H1 (cell line): ENCODE measurements at regions of chr7 and their contacts with region 1.

Region 1: GRCh38 chr7:56019501-56019900 is 31.7 kb downstream of the PSPH start:
- DNase-seq: no peak
- H3K4me3 ChIP-seq: no peak overlapping the region
- H3K27ac ChIP-seq: no peak overlapping the region
- H3K4me1 ChIP-seq: no peaks in the 10 kb centered on the region
- H3K27me3 ChIP-seq: no peaks in the 10 kb centered on the region
- CTCF ChIP-seq: no peak
- EP300 ChIP-seq: no peak
- POLR2A ChIP-seq: no peak
- RAD21 ChIP-seq: no peak

Region 2: DNA sequence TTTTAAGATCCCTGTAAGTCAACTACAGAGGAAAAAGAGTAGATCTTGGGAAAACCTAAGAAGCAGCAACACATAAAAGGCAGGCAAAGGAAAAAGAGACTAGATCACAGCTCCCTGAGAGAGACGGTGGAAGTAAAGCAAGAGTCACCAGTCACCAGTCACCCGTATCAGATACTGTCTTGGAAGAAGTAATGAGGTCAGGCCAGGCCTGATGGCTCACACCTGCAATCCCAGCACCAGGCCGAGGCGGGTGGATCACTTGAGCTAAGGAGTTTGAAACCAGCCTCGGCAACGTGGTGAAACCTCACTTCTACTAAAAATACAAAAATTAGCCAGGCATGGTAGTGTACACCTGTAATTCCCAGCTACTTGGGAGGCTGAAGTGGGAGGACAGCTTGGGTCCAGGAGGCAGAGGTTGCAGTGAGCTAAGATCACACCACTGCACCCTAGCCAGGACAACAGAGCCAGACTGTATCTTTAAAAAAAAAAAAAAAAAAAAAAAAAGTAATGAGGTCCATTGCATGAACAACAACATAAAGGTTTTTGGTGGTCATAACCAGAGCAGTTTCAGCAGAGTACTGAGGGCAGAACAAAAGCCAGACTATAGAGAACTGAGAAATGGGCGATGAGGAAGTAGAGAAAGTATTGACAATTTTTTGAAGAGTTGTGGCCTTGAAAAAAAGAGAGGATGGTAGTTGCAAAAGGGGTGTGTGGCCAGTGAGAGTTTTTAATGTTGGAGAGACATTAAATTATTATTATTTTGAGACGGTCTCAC is 115.3 kb before region 1 on chr7:
- CTCF ChIA-PET with region 1: no interaction called
- POLR2A ChIA-PET with region 1: no interaction called
- DNase-seq: no peak
- H3K4me3 ChIP-seq: no peak overlapping the region
- H3K27ac ChIP-seq: no peak overlapping the region
- H3K4me1 ChIP-seq: peaks cover 0 to 3% (median 0%) of the 10 kb centered on the region in 4 experiments; a peak in 1 of 7 replicates
- H3K27me3 ChIP-seq: no peaks in the 10 kb centered on the region
- CTCF ChIP-seq: no peak
- EP300 ChIP-seq: no peak
- POLR2A ChIP-seq: no peak
- RAD21 ChIP-seq: no peak

Region 3: GRCh38 chr7:56003749-56004148 is 15.8 kb before region 1 on chr7:
- CTCF ChIA-PET with region 1: interaction called, 15 read pairs
- POLR2A ChIA-PET with region 1: interaction called, 7 read pairs
- DNase-seq: no peak
- H3K4me3 ChIP-seq: no peak overlapping the region
- H3K27ac ChIP-seq: no peak overlapping the region
- H3K4me1 ChIP-seq: no peaks in the 10 kb centered on the region
- H3K27me3 ChIP-seq: no peaks in the 10 kb centered on the region; a peak in 1 of 7 replicates
- CTCF ChIP-seq: no peak
- EP300 ChIP-seq: no peak
- POLR2A ChIP-seq: no peak
- RAD21 ChIP-seq: no peak

Region 4: DNA sequence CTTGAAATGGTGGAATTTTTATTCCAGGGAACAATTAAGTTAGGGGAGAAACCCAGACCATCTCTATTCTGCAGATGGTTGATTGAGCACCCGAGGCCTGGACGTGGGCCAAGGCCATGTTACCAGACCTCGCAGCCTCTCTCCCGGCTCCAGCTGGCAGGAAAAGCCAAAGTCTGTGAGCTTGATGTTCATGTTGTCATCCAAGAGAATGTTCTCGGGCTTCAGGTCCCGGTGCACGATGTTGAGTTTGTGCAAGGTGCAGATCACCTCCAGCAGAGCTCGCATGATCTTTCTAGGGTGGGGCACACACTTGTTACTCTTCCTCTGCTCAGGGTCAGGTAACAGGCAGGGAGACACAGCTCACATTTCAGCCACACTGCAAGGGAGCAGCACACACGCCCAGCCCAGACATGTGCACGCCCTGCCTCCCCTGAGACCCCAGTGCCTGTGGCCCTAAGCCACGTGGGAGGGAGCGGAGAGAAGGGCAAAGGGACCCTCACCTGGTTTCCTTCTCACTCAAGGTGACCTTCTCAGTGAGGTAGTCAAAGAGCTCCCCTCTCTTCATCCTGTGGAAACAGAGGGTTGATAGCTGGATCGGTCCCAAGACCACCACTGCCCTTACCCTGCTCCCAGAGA is 63.8 kb after region 1 on chr7:
- CTCF ChIA-PET with region 1: no interaction called
- POLR2A ChIA-PET with region 1: no interaction called
- DNase-seq: no peak
- H3K4me3 ChIP-seq: no peak overlapping the region
- H3K27ac ChIP-seq: no peak overlapping the region
- H3K4me1 ChIP-seq: no peaks in the 10 kb centered on the region; a peak in 2 of 7 replicates
- H3K27me3 ChIP-seq: no peaks in the 10 kb centered on the region
- CTCF ChIP-seq: no peak
- EP300 ChIP-seq: no peak
- POLR2A ChIP-seq: no peak
- RAD21 ChIP-seq: no peak